Activated T-helper 2 cell treated with anti-CD3 and anti-CD28 coated beads, Interferon-gamma antibody, Interleukin-2, Interleukin-4, amounts not matched to agents 10 μg/mL and 5 μg/mL and 100 μg/mL, durations not matched to agents 14 hours and 24 hours and 36 hours (primary cell): ENCODE measurements at regions of chr3 and their contacts with region 1.

Region 1: GRCh38 chr3:143674100-143674968 is 173.9 kb downstream of the SLC9A9 start:
- DNase-seq: peak; percentile 66
- H3K4me3 Mint-ChIP-seq: no peak overlapping the region
- H3K27ac Mint-ChIP-seq: no peak overlapping the region
- H3K4me1 Mint-ChIP-seq: peaks cover 8% of the 10 kb centered on the region
- H3K27me3 Mint-ChIP-seq: peaks cover 15% of the 10 kb centered on the region

Region 2: DNA sequence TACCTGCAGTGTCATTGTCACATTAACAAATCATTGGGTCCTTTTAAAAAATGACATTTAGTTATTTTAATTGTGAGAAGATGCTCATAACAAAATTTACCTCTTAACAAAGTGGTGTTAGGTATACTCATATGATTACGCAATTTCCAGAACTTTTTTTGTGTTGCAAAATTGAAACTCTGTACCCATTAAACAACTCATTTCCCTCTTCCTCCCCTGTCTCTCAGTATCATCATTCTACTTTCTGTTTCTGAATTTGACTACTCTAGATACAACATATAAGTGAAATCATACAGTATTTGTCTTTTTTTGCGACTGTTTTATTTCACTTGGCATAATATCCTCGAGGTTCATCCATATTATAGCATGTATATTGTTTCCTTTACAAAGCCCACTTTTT is 613.4 kb before region 1 on chr3:
- intact Hi-C with region 1: loop called (anchors 2 kb)
- DNase-seq: no peak
- H3K4me3 Mint-ChIP-seq: no peak overlapping the region
- H3K27ac Mint-ChIP-seq: no peak overlapping the region
- H3K4me1 Mint-ChIP-seq: peaks cover 19% of the 10 kb centered on the region
- H3K27me3 Mint-ChIP-seq: no peaks in the 10 kb centered on the region

Region 3: GRCh38 chr3:143302638-143303171 is 371.6 kb before region 1 on chr3:
- intact Hi-C with region 1: loop called (anchors 10 kb)
- DNase-seq: no peak
- H3K4me3 Mint-ChIP-seq: no peak overlapping the region
- H3K27ac Mint-ChIP-seq: no peak overlapping the region
- H3K4me1 Mint-ChIP-seq: peaks cover 36% of the 10 kb centered on the region
- H3K27me3 Mint-ChIP-seq: no peaks in the 10 kb centered on the region

Region 4: DNA sequence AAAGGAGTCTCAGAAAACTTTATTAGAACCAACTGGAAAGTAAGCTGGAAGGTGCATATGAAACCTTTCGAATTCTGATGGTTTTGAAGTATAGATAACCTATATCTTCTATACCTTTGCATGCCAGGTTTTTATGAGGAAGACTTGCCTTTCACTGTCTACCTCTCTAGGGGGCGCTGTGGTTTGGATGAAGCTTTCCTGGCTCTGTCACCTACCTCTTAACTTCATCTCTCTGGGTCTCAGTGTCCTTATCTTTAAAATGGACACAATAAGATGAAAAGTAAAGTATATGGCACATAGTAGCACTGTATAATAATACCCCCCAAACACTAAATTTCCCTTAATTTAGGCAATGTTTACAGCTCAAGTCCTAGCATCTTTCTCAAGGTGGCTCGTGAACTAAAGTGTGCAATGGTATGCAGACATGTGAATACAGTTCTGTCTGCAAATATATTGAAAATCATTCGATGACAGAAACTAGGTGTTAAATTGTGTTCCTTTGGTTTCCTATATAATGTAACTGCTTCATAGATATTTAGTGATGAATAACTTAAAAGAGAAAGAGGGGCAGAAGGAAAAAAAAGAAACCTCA is 240.5 kb before region 1 on chr3:
- intact Hi-C with region 1: loop called (anchors 1 kb)
- DNase-seq: no peak
- H3K4me3 Mint-ChIP-seq: no peak overlapping the region
- H3K27ac Mint-ChIP-seq: no peak overlapping the region
- H3K4me1 Mint-ChIP-seq: no peaks in the 10 kb centered on the region
- H3K27me3 Mint-ChIP-seq: no peaks in the 10 kb centered on the region

Region 5: DNA sequence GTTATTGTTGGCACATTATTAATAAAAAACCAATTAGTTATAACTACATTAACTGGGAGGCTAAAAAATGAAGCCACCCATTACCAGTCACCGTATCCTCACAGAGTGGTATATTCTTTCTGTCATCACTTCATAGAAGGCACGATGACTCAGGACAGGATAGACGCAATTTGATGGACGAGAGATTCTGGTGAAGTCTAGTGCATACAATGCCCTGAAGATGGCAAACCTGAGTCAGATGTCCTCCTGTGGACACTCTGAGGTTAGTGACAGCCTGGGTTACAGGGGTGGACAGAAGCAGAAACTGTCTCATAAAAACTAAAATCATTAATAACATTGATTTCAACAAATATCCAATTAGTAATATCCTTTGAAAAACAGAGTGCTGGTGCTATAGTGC is 23.6 kb after region 1 on chr3:
- intact Hi-C with region 1: no loop called
- DNase-seq: no peak
- H3K4me3 Mint-ChIP-seq: no peak overlapping the region
- H3K27ac Mint-ChIP-seq: no peak overlapping the region
- H3K4me1 Mint-ChIP-seq: no peaks in the 10 kb centered on the region
- H3K27me3 Mint-ChIP-seq: peaks cover 4% of the 10 kb centered on the region